ENCODE measurements at regions of chr17 and their contacts with region 1.

Region 1: DNA sequence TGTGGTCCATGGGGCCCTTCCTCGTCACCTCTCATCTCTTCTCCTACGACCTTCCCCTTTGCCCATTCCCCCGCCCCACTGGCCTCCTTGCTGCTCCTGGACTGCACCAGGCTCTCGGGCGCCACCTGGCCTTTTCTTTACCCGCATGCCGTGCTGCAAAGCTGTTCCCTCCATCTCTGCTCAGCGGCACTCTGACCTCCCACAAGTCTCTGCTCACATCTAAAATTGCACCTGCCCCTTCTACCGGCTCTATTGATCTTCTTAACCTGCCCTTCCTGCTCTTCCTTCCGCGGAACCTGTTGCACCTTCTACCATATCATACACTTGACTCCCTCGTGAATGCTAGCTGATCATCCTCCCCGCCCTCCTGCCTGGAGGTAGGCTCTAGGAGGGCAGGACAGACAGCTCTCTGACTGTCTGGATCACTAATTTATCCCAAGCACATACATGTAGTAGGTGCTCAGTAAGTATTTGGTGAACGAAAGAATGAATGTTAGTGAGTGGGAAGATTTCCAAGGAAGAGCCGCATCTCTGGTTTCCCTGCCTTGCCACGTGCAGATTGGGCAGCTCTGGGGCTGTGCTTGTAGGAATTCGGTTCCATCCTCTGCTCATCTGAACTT is 17.3 kb downstream of the DNAH17 start:
- DNase-seq: peak; percentile 78
- ATAC-seq: peak; percentile 97
- H3K4me3 Mint-ChIP-seq: no peak overlapping the region
- H3K27ac Mint-ChIP-seq: no peak overlapping the region
- H3K4me1 Mint-ChIP-seq: no peaks in the 10 kb centered on the region
- H3K27me3 Mint-ChIP-seq: no peaks in the 10 kb centered on the region
- CTCF ChIP-seq: peak; percentile 23; the same call in 1 of the 2 replicates

Region 2: DNA sequence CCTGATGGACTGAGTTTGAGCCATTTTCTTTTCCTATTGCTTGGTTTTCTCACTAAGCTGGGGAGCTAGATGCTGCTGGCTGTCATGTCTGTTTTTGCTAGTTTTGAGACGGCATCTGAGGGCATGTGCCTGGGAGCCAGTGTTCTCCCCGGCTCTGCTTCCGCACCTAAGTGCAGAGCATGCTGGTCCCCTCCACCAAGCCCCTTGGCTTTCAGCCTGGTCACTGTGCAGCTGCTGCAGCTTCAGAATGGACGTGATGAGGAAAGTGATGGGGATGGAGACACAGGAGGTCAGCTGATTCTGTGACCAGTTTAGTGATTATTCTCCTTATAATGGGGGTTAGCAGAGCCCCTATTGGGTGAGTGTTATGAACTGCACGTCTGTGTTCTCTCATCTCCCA is 11.1 kb before region 1 on chr17:
- CTCF ChIA-PET with region 1: interaction called, 16 read pairs
- POLR2A ChIA-PET with region 1: no interaction called
- DNase-seq: no peak
- ATAC-seq: no peak
- H3K4me3 Mint-ChIP-seq: no peak overlapping the region
- H3K27ac Mint-ChIP-seq: no peak overlapping the region
- H3K4me1 Mint-ChIP-seq: no peaks in the 10 kb centered on the region
- H3K27me3 Mint-ChIP-seq: no peaks in the 10 kb centered on the region
- CTCF ChIP-seq: no peak